HCT116 (cell line): ENCODE measurements at regions of chr18 and their contacts with region 1.

Region 1: GRCh38 chr18:13520306-13520705 is 206.1 kb downstream of the FAM210A start:
- DNase-seq: no peak
- ATAC-seq: no peak
- H3K4me3 ChIP-seq: no peak overlapping the region
- H3K27ac ChIP-seq: no peak overlapping the region
- H3K4me1 ChIP-seq: no peaks in the 10 kb centered on the region
- H3K27me3 ChIP-seq: peaks cover 11% of the 10 kb centered on the region; the same call in 1 of the 2 replicates
- CTCF ChIP-seq: no peak
- POLR2A ChIP-seq: no peak
- RAD21 ChIP-seq: no peak

Region 2: GRCh38 chr18:13416208-13416607 is 104.1 kb before region 1 on chr18:
- CTCF ChIA-PET with region 1: no interaction called
- POLR2A ChIA-PET with region 1: no interaction called
- RAD21 ChIA-PET with region 1: no interaction called
- intact Hi-C with region 1: loop called (anchors 10 kb)
- DNase-seq: no peak
- ATAC-seq: no peak
- H3K4me3 ChIP-seq: no peak overlapping the region
- H3K27ac ChIP-seq: no peak overlapping the region
- H3K4me1 ChIP-seq: no peaks in the 10 kb centered on the region
- H3K27me3 ChIP-seq: no peaks in the 10 kb centered on the region
- CTCF ChIP-seq: no peak
- POLR2A ChIP-seq: no peak
- RAD21 ChIP-seq: no peak

Region 3: GRCh38 chr18:13464432-13465123 is 55.7 kb before region 1 on chr18:
- CTCF ChIA-PET with region 1: no interaction called
- POLR2A ChIA-PET with region 1: no interaction called
- RAD21 ChIA-PET with region 1: no interaction called
- intact Hi-C with region 1: no loop called
- DNase-seq: no peak
- ATAC-seq: no peak
- H3K4me3 ChIP-seq: no peak overlapping the region
- H3K27ac ChIP-seq: no peak overlapping the region
- H3K4me1 ChIP-seq: no peaks in the 10 kb centered on the region
- H3K27me3 ChIP-seq: peaks cover 6% of the 10 kb centered on the region; the same call in 1 of the 2 replicates
- CTCF ChIP-seq: no peak
- POLR2A ChIP-seq: no peak
- RAD21 ChIP-seq: no peak